Naive thymus-derived CD4-positive, alpha-beta T cell (primary cell): ENCODE measurements at regions of chr7 and their contacts with region 1.

Region 1: GRCh38 chr7:101217388-101218235 is at the starts of genes PLOD3 and ZNHIT1:
- DNase-seq: peak; percentile 86 to 97 (median 94)
- ATAC-seq: peak; percentile 85
- H3K4me3 ChIP-seq: peak within 1 kb of the TSS; percentile 70
- H3K4me3 Mint-ChIP-seq: peak within 1 kb of the TSS; percentile 89 to 97 (median 96)
- H3K27ac ChIP-seq: peak within 1 kb of the TSS; percentile 87
- H3K27ac Mint-ChIP-seq: peak within 1 kb of the TSS; percentile 88 to 96 (median 93)
- H3K4me1 ChIP-seq: peaks cover 15% of the 10 kb centered on the region in 2 donors
- H3K4me1 Mint-ChIP-seq: peaks cover 27 to 54% (median 46%) of the 10 kb centered on the region in 7 donors
- H3K27me3 ChIP-seq: no peaks in the 10 kb centered on the region
- H3K27me3 Mint-ChIP-seq: no peaks in the 10 kb centered on the region
- total RNA-seq, gene PLOD3: 18.5 to 88.4 (median 44.2) TPM
- total RNA-seq, gene ZNHIT1: 32.1 to 72.1 (median 37.6) TPM

Region 2: GRCh38 chr7:100874577-100875355 is 342.8 kb before region 1 on chr7 and contains the start of gene SRRT:
- CTCF ChIA-PET with region 1: no interaction called
- POLR2A ChIA-PET with region 1: interaction called, 6 read pairs
- intact Hi-C with region 1: loop called in 1 of 2 experiments (anchors 1 kb)
- DNase-seq: peak; percentile 92 to 99 (median 97)
- ATAC-seq: peak; percentile 98
- H3K4me3 ChIP-seq: peak within 1 kb of the TSS; percentile 78
- H3K4me3 Mint-ChIP-seq: peak within 1 kb of the TSS; percentile 96 to 100 (median 98)
- H3K27ac ChIP-seq: peak within 1 kb of the TSS; percentile 94
- H3K27ac Mint-ChIP-seq: peak within 1 kb of the TSS; percentile 97 to 99 (median 98)
- H3K4me1 ChIP-seq: peaks cover 22 to 30% of the 10 kb centered on the region in 2 donors
- H3K4me1 Mint-ChIP-seq: peaks cover 27 to 55% (median 52%) of the 10 kb centered on the region in 7 donors
- H3K27me3 ChIP-seq: no peaks in the 10 kb centered on the region
- H3K27me3 Mint-ChIP-seq: no peaks in the 10 kb centered on the region
- total RNA-seq, gene SRRT: 212 to 271 (median 261) TPM

Region 3: GRCh38 chr7:101153969-101154692 is 63.5 kb before region 1 on chr7 and contains the start of gene AP1S1:
- CTCF ChIA-PET with region 1: no interaction called
- POLR2A ChIA-PET with region 1: interaction called, 7 read pairs
- intact Hi-C with region 1: loop called (anchors 1 kb)
- DNase-seq: peak; percentile 82 to 94 (median 90)
- ATAC-seq: peak; percentile 95
- H3K4me3 ChIP-seq: peak within 1 kb of the TSS; percentile 62
- H3K4me3 Mint-ChIP-seq: peak within 1 kb of the TSS; percentile 70 to 91 (median 84)
- H3K27ac ChIP-seq: peak within 1 kb of the TSS; percentile 42
- H3K27ac Mint-ChIP-seq: peak within 1 kb of the TSS in 8 of 9 donors; percentile 29 to 95 (median 78)
- H3K4me1 ChIP-seq: peaks cover 10% of the 10 kb centered on the region in 2 donors
- H3K4me1 Mint-ChIP-seq: peaks cover 10 to 21% (median 13%) of the 10 kb centered on the region in 7 donors
- H3K27me3 ChIP-seq: no peaks in the 10 kb centered on the region
- H3K27me3 Mint-ChIP-seq: peaks cover 7 to 24% (median 8%) of the 10 kb centered on the region in 5 donors
- total RNA-seq, gene AP1S1: 6.2 to 39.4 (median 8.3) TPM

Region 4: DNA sequence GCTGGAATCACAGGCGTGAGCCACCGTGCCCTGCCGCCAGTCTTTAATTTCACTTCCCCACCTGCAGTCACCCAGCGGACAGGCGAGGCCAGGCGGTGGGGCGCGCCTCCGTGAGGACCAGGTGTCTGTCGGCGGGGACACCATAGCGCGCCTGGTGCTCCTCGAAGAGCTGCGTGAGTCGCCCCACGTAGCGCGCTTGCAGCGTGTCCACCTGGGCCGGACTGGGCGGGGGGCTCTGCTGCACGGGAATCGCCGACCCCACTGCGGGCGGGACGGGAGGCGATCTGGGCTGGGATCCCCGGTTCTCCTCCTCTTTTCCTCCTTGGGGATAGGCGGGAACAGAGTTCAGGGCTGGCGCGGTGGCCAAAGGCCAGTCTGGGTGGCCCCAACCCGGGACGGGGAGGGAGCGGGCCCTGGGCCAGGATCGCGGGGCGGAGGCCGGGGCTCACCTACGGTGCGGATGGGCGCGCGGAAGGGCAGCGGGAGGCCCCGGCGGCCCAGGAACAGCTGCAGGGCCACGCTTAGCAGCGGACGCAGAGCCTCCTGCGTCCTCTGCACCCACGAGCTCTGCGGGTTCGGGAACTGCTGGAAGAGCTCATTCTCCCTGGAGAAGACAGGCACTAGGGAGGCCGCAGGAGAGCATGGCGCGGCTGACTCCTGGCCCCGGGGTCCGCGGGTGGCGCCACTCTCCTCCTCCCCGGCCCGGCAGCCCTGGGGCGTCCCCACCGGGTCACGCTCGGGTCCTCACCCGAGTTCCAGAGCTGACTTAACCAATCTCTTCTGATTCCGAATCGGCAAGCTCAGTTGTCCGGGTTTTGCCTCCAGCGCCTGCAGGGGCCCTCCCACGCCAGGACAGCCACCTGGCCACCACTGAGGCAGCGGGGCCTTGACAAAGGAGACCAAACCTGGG is 15.7 kb before region 1 on chr7:
- CTCF ChIA-PET with region 1: interaction called, 14 read pairs
- POLR2A ChIA-PET with region 1: interaction called, 16 read pairs
- intact Hi-C with region 1: loop called in 1 of 2 experiments (anchors 1 kb)
- DNase-seq: no peak
- ATAC-seq: no peak
- H3K4me3 ChIP-seq: no peak overlapping the region
- H3K4me3 Mint-ChIP-seq: peak overlapping the region in 6 of 10 donors; percentile 23 to 65 (median 42)
- H3K27ac ChIP-seq: no peak overlapping the region
- H3K27ac Mint-ChIP-seq: no peak overlapping the region
- H3K4me1 ChIP-seq: peaks cover 0 to 2% of the 10 kb centered on the region in 2 donors
- H3K4me1 Mint-ChIP-seq: peaks cover 0 to 22% (median 16%) of the 10 kb centered on the region in 7 donors
- H3K27me3 ChIP-seq: peaks cover 0 to 7% of the 10 kb centered on the region in 2 donors
- H3K27me3 Mint-ChIP-seq: peaks cover 19 to 43% (median 29%) of the 10 kb centered on the region in 5 donors

Region 5: DNA sequence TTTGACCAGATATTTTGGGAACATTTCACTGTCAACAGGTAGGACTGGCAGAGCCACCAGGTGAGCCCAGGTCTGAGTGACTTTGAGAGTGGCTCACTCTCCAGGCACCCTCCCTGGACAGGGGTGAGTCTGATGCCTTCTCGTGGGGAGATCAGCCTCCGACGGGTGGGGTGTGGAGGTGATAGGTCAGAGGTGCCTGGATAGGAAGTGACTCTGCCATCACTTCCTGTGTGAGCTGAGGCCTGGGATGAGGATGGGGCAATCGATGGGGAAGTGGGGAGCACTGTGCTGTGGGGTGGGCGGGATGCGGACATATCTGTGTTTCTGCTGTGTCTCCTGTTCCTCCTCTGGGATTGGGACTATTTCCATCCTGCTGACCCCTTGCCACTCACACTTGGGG is 69.4 kb after region 1 on chr7:
- CTCF ChIA-PET with region 1: interaction called, 6 read pairs
- POLR2A ChIA-PET with region 1: no interaction called
- intact Hi-C with region 1: loop called in 1 of 2 experiments (anchors 1 kb)
- DNase-seq: no peak
- ATAC-seq: no peak
- H3K4me3 ChIP-seq: no peak overlapping the region
- H3K4me3 Mint-ChIP-seq: no peak overlapping the region
- H3K27ac ChIP-seq: no peak overlapping the region
- H3K27ac Mint-ChIP-seq: no peak overlapping the region
- H3K4me1 ChIP-seq: no peaks in the 10 kb centered on the region
- H3K4me1 Mint-ChIP-seq: peaks cover 3 to 17% (median 5%) of the 10 kb centered on the region in 7 donors
- H3K27me3 ChIP-seq: no peaks in the 10 kb centered on the region
- H3K27me3 Mint-ChIP-seq: peaks cover 6 to 21% (median 9%) of the 10 kb centered on the region in 5 donors

Region 6: GRCh38 chr7:101717628-101718357 is 500.2 kb after region 1 on chr7:
- CTCF ChIA-PET with region 1: no interaction called
- POLR2A ChIA-PET with region 1: no interaction called
- intact Hi-C with region 1: no loop called
- DNase-seq: peak in 1 of 9 donors; percentile 25
- ATAC-seq: peak; percentile 81
- H3K4me3 ChIP-seq: no peak overlapping the region
- H3K4me3 Mint-ChIP-seq: no peak overlapping the region
- H3K27ac ChIP-seq: no peak overlapping the region
- H3K27ac Mint-ChIP-seq: no peak overlapping the region
- H3K4me1 ChIP-seq: no peaks in the 10 kb centered on the region
- H3K4me1 Mint-ChIP-seq: no peaks in the 10 kb centered on the region
- H3K27me3 ChIP-seq: no peaks in the 10 kb centered on the region
- H3K27me3 Mint-ChIP-seq: peaks cover 0 to 5% (median 0%) of the 10 kb centered on the region in 5 donors